HepG2 (cell line): ENCODE measurements at regions of chr19 and their contacts with region 1.

Region 1: DNA sequence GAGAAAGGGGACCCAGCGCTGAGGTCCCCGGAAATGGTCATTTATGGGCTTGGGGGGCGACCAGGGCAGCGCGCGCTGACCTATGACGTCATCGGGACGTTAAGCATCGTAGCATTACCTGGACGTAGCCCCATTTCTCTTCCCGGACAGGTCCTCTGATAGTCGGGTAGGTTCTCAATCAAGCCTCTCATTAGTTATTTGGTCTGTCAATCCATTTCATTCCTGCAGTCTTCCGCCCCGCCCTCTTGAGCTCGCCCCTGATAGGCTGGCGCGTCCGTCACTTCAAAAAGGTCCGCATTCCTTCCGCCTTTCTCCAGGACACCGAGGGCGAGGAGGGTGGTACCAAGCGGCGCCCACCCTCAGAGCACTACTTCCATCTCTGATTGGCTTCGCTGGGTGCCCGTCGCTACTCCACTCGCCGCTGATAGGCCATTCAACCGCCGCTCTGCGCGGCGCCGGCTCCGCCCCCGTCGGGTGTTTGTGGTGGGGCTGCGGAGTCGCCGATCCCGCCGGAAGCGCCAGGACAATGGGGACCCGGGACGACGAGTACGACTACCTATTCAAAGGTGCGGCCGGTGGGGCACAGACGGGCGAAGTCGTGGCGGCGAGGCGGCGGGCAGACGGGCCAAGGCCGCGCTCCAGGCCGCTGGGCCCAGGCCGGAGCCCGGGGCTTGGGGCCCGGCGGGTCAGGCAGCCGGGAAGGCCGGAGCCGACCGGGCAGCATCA is at the start of gene RAB11B:
- DNase-seq: peak; percentile 99
- ATAC-seq: peak; percentile 92
- H3K4me3 ChIP-seq: peak within 1 kb of the TSS; percentile 84 to 86 (median 85)
- H3K27ac ChIP-seq: peak within 1 kb of the TSS; percentile 96
- H3K4me1 ChIP-seq: peaks cover 87% of the 10 kb centered on the region
- H3K27me3 ChIP-seq: no peaks in the 10 kb centered on the region
- CTCF ChIP-seq: no peak
- EP300 ChIP-seq: 0 out of 4 replicates have a peak, but pooled peaks have one; percentile 4 to 8
- POLR2A ChIP-seq: peak; percentile 50 to 77
- RAD21 ChIP-seq: peak; percentile 51; the same call in 1 of the 2 replicates
- total RNA-seq, gene RAB11B: 6.0 and 11.5 TPM in 2 replicates

Region 2: DNA sequence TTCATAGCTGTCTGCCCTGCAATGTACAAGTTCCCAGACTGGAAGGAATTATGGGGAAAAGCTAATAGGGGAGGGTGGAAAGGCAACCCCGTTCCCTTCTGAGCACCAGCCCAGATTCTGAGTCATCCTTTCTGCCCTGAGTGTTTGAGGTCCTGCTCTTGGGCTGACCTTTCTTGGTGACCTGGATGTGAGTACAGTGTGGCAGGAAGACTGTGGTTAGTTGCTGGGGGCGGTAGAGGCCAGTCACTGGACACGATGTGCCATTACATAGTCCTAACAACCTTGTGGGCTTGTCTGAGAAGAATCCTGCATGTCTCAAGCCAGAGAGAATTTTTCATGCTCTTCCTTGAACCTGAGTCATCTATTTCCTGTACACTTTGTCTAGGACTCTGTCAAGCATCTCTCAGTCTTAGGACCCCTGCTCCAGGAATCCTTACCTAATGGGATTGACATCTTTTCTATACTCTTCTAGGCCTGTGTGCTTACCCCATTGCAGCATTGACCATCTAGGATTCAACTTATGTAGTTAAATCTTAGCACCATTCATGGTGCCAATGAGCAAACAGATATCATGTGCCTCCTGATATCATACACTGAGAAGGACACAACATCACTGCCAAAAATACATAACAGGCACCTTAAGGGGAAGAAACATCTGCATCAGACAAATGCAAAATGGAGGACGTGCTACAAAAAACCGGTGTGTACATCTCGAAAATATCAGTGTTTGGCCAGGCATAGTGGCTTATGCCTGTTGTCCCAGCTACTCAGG is 34.2 kb before region 1 on chr19:
- CTCF ChIA-PET with region 1: interaction called, 5 read pairs
- POLR2A ChIA-PET with region 1: interaction called, 12 read pairs
- in situ Hi-C with region 1: loop called (anchors 5 kb)
- intact Hi-C with region 1: no loop called
- DNase-seq: peak; percentile 72
- ATAC-seq: peak; percentile 59
- H3K4me3 ChIP-seq: no peak overlapping the region; a peak in 1 of 6 replicates
- H3K27ac ChIP-seq: peak overlapping the region; percentile 17
- H3K4me1 ChIP-seq: peaks cover 71% of the 10 kb centered on the region
- H3K27me3 ChIP-seq: no peaks in the 10 kb centered on the region
- CTCF ChIP-seq: peak; percentile 60
- EP300 ChIP-seq: peak in 1 of 2 experiments; percentile 53; a peak in 1 of 4 replicates
- POLR2A ChIP-seq: no peak
- RAD21 ChIP-seq: no peak

Region 3: DNA sequence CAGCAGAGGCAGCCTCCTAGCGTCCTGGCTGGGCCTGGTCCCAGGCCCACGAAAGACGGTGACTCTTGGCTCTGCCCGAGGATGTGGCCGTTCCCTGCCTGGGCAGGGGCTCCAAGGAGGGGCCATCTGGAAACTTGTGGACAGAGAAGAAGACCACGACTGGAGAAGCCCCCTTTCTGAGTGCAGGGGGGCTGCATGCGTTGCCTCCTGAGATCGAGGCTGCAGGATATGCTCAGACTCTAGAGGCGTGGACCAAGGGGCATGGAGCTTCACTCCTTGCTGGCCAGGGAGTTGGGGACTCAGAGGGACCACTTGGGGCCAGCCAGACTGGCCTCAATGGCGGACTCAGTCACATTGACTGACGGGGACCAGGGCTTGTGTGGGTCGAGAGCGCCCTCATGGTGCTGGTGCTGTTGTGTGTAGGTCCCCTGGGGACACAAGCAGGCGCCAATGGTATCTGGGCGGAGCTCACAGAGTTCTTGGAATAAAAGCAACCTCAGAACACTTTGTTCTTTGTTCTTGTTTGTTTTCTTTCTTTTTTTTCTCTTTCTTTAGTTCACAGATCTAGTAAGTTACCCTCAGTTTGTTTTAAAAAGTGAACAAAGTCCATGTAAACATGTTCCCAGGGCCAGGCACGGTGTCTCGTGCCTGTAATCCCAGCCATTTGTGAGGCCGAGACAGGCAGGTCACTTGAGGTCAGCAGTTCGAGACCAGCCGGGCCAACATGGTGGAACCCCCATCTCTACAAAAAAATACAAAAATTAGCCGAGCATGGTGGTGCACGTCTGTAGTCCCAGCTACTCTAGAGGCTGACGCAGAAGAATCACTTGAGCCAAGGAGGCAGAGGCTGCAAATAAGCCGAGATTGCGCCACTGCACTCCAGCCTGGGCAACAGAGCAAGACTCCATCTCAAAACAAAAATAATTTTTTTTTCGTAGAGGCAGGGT is 15.9 kb before region 1 on chr19:
- CTCF ChIA-PET with region 1: no interaction called
- POLR2A ChIA-PET with region 1: interaction called, 41 read pairs
- in situ Hi-C with region 1: no loop called
- intact Hi-C with region 1: loop called (anchors 1 kb)
- DNase-seq: peak; percentile 98
- ATAC-seq: peak; percentile 91
- H3K4me3 ChIP-seq: no peak overlapping the region
- H3K27ac ChIP-seq: peak overlapping the region; percentile 84
- H3K4me1 ChIP-seq: peaks cover 70% of the 10 kb centered on the region
- H3K27me3 ChIP-seq: no peaks in the 10 kb centered on the region
- CTCF ChIP-seq: peak; percentile 91
- EP300 ChIP-seq: peak; percentile 96
- POLR2A ChIP-seq: peak in 1 of 2 experiments; percentile 23; a peak in 1 of 4 replicates
- RAD21 ChIP-seq: peak; percentile 94

Region 4: DNA sequence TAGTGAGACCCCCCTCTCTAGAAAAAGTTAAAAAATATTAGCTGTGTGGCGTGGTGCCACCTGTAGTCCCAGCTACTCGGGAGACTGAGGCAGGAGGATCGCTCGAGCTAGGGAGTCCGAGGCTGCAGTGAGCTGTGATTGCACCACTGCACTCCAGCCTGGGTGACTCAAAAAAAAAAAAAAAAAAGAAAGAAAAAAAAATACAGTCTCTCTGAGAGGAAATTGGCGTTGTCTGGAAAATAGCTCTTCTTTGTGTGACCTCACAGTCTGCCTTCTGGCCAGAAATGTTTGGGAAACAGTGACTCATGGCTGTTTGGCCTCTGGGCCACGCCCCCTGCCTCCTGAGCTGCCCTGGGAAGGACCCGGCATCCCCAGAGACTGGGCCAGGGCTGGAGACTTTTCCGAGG is 33.8 kb after region 1 on chr19:
- CTCF ChIA-PET with region 1: no interaction called
- POLR2A ChIA-PET with region 1: interaction called, 13 read pairs
- in situ Hi-C with region 1: no loop called
- intact Hi-C with region 1: no loop called
- DNase-seq: peak; percentile 93
- ATAC-seq: peak; percentile 83
- H3K4me3 ChIP-seq: peak overlapping the region; percentile 28 to 64 (median 55); a peak in 5 of 6 replicates
- H3K27ac ChIP-seq: peak overlapping the region; percentile 86
- H3K4me1 ChIP-seq: peaks cover 39% of the 10 kb centered on the region
- H3K27me3 ChIP-seq: no peaks in the 10 kb centered on the region
- CTCF ChIP-seq: no peak
- EP300 ChIP-seq: no peak
- POLR2A ChIP-seq: no peak
- RAD21 ChIP-seq: no peak

Region 5: GRCh38 chr19:8494158-8494557 is 104.1 kb after region 1 on chr19:
- CTCF ChIA-PET with region 1: no interaction called
- POLR2A ChIA-PET with region 1: no interaction called
- in situ Hi-C with region 1: no loop called
- intact Hi-C with region 1: no loop called
- DNase-seq: no peak
- ATAC-seq: peak; percentile 13; the same call in 1 of the 3 replicates
- H3K4me3 ChIP-seq: peak overlapping the region in 1 of 3 experiments; percentile 28; a peak in 1 of 6 replicates
- H3K27ac ChIP-seq: no peak overlapping the region
- H3K4me1 ChIP-seq: peaks cover 10% of the 10 kb centered on the region
- H3K27me3 ChIP-seq: peaks cover 0 to 10% of the 10 kb centered on the region in 2 experiments; a peak in 1 of 5 replicates
- CTCF ChIP-seq: no peak
- EP300 ChIP-seq: no peak
- POLR2A ChIP-seq: no peak
- RAD21 ChIP-seq: no peak